Right ventricle myocardium inferior (tissue), 1 donor: ENCODE measurements at regions of chrX and their contacts with region 1.

Region 1: DNA sequence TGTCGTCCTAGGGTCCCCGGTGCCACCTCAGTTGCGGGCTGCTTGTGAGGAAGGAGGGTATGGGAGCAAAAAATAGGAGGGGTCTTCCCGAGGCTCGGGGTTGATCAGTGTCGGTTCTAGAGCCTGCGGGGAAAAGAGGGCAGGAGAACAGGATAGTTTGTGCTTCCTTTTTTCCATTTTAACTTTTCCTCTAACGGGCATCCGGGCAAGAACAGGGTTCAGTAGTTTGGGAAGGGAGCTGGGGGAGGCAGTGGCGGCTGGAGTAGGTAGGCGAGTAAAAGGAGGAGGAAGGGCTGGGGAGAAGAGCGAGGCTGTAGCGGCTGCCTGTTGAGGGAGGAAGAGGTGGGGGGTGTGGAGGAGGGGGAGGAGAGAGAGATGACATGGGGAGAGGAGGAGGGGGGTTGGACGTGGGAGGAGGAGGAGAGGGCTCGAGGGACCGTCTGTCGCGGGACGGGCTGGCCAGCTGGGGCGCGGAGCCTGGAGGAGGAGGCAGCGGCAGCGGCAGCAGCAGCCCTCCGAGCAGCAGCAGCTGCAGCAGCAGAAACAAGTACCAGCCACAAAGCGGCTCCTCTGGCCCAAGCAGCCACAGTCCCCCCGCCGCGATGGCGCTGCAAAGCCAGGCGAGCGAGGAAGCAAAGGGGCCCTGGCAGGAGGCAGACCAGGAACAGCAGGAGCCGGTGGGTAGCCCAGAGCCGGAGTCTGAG is at the start of gene SLC16A2:
- DNase-seq: peak; percentile 80
- ATAC-seq: peak; percentile 77
- total RNA-seq, gene SLC16A2: 8.2 TPM

Region 2: GRCh38 chrX:74291964-74292807 is 129.0 kb before region 1 on chrX:
- intact Hi-C with region 1: loop called (anchors 10 kb)
- DNase-seq: peak; percentile 95
- ATAC-seq: peak; percentile 97

Region 3: DNA sequence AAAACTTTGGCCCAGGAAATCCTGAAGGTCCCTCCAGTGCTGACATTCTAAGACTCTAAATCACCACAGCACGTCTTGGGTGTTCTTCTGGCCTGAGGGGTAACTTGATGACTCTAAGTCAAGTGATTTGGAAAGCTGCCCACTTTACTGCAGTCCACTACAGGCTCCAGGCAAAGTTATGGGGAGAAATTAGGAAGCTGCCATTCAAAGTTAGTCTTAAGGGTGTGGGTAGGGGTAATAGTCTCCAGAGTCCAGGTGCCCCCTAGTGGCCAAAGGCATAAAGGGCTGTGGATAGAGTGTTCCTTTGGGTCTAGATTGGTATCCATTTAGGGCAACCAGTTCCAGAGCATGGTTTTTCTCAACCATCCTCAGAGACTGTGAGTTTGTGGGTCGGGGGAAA is 38.6 kb before region 1 on chrX:
- intact Hi-C with region 1: loop called (anchors 5 kb)
- DNase-seq: peak; percentile 63
- ATAC-seq: peak; percentile 80